Natural killer cell (primary cell): ENCODE measurements at regions of chr5 and their contacts with region 1.

Region 1: DNA sequence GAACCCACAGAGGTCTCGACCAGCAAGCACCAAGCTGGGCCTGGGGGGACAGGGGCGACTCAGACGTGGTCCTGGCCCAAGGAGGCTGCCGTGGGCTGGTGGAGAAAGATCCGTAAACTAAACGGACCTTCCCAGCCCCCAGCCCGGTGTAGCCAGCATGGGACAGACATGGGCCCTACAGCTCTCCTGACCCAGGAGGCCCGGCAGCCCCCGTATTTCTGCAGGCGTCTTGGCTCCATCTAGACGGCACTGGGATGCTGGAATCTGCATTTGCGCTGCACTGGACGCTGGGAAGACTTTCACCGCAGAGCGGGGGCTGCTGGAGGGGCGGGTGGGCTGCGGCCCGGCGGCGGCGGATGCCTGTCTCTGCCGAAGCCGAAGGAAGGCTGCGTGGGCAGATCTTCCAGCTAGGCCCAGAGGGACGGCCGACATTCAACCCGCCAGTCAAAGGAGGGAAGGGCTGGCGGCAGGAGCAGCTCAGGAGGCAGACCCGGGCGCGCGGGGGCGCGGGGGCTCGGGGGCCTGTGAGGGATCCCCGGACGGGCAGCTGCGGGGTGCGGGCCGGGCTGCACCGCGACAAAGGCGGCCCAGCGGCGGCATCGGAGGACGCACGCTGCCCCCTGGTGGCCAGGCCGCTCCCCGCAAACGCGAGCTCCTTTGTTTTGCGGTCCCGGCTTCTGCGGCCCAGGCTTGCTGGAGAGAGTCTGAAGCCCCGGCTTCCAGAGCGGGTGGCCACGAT is 266.2 kb downstream of the NSG2 start:
- DNase-seq: peak; percentile 22 to 66
- ATAC-seq: peak in 2 of 3 donors; percentile 55 to 77
- H3K4me3 ChIP-seq: no peak overlapping the region
- H3K4me3 Mint-ChIP-seq: no peak overlapping the region
- H3K27ac ChIP-seq: no peak overlapping the region
- H3K27ac Mint-ChIP-seq: no peak overlapping the region
- H3K4me1 ChIP-seq: peaks cover 3% of the 10 kb centered on the region
- H3K4me1 Mint-ChIP-seq: peaks cover 0 to 5% of the 10 kb centered on the region in 2 donors
- H3K27me3 ChIP-seq: peaks cover 4% of the 10 kb centered on the region
- H3K27me3 Mint-ChIP-seq: peaks cover 16 to 23% of the 10 kb centered on the region in 2 donors
- CTCF ChIP-seq: peak; percentile 49

Region 2: DNA sequence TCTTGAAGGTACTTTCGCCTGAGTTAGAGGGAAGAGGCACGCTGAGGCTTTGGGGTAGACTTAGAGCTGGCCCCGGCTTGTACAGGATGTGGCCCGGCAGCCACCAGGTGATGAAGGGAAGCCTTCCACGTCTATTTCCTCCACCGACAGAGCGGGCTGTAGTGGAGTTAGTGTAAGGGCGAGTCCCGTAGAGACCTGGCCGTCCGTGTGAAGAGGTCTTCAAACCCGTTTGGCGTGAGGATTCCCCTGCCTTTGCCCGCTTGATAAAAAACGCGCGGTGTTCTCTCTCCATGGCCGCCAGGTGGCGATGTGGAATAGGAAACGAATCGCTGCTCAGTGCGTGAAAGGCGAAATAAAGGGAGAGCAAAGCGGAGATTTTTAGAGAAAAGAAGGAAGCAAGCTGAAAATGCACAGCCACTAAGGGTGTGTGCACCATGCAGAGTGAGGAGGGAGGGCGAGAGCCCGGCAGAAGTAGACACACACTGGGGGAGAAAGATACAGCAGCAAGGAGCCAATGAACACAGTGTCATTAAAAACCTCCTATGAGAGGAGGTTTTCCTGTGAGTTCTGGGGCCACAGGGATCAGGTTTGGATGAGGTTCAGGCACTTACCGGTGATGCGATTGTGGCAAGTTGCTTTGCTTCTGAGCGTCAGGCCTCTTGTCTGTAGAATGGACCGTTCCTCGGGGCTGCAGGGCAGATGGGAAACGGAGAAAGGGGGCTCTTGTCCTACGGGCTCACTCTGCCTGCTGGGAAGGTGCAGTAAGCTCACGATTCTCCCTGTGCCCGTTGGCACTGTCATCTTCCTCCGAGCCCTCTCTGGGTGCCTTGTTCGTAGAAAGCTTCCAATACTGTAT is 1017.7 kb before region 1 on chr5:
- intact Hi-C with region 1: loop called (anchors 5 kb)
- DNase-seq: peak; percentile 44 to 76
- ATAC-seq: peak; percentile 58 to 80 (median 68)
- H3K4me3 ChIP-seq: no peak overlapping the region
- H3K4me3 Mint-ChIP-seq: peak overlapping the region; percentile 41
- H3K27ac ChIP-seq: no peak overlapping the region
- H3K27ac Mint-ChIP-seq: no peak overlapping the region
- H3K4me1 ChIP-seq: peaks cover 11% of the 10 kb centered on the region
- H3K4me1 Mint-ChIP-seq: peaks cover 8 to 13% of the 10 kb centered on the region in 2 donors
- H3K27me3 ChIP-seq: peaks cover 3% of the 10 kb centered on the region
- H3K27me3 Mint-ChIP-seq: peaks cover 30 to 44% of the 10 kb centered on the region in 2 donors
- CTCF ChIP-seq: peak; percentile 77